H1 (cell line): ENCODE measurements at regions of chr1 and their contacts with region 1.

Region 1: GRCh38 chr1:204089044-204089751 is 16.3 kb downstream of the SOX13 start:
- DNase-seq: peak in 1 of 2 experiments; percentile 59
- H3K4me3 ChIP-seq: no peak overlapping the region
- H3K27ac ChIP-seq: no peak overlapping the region
- H3K4me1 ChIP-seq: peaks cover 37 to 64% (median 50%) of the 10 kb centered on the region in 4 experiments
- H3K27me3 ChIP-seq: no peaks in the 10 kb centered on the region
- CTCF ChIP-seq: peak in 1 of 3 experiments; percentile 12; a peak in 1 of 4 replicates
- EP300 ChIP-seq: no peak
- POLR2A ChIP-seq: no peak
- RAD21 ChIP-seq: peak in 1 of 2 experiments; percentile 30; a peak in 1 of 4 replicates

Region 2: GRCh38 chr1:204072931-204073836 is 16.0 kb before region 1 on chr1 and contains the start of gene SOX13:
- CTCF ChIA-PET with region 1: interaction called, 17 read pairs
- POLR2A ChIA-PET with region 1: interaction called, 101 read pairs
- DNase-seq: peak; percentile 80 to 93
- H3K4me3 ChIP-seq: peak within 1 kb of the TSS; percentile 90 to 98 (median 94)
- H3K27ac ChIP-seq: peak within 1 kb of the TSS; percentile 71; the same call in 1 of the 2 replicates
- H3K4me1 ChIP-seq: peaks cover 13 to 31% (median 24%) of the 10 kb centered on the region in 4 experiments
- H3K27me3 ChIP-seq: no peaks in the 10 kb centered on the region
- CTCF ChIP-seq: peak; percentile 17 to 46 (median 21)
- EP300 ChIP-seq: no peak
- POLR2A ChIP-seq: peak; percentile 83 to 93
- RAD21 ChIP-seq: peak; percentile 49 to 72
- total RNA-seq, gene SOX13: 173 and 180 TPM in 2 replicates

Region 3: GRCh38 chr1:204114606-204115005 is 25.4 kb after region 1 on chr1:
- CTCF ChIA-PET with region 1: interaction called, 12 read pairs
- POLR2A ChIA-PET with region 1: interaction called, 3 read pairs
- DNase-seq: no peak
- H3K4me3 ChIP-seq: no peak overlapping the region
- H3K27ac ChIP-seq: no peak overlapping the region
- H3K4me1 ChIP-seq: peaks cover 0 to 18% (median 13%) of the 10 kb centered on the region in 4 experiments; a peak in 6 of 7 replicates
- H3K27me3 ChIP-seq: no peaks in the 10 kb centered on the region; a peak in 1 of 7 replicates
- CTCF ChIP-seq: no peak
- EP300 ChIP-seq: no peak
- POLR2A ChIP-seq: no peak
- RAD21 ChIP-seq: no peak